Caco-2 (cell line): ENCODE measurements at regions of chr14 and their contacts with region 1.

Region 1: GRCh38 chr14:24431569-24432258 is 2.0 kb downstream of the KHNYN start:
- DNase-seq: peak; percentile 93 to 94
- H3K4me3 ChIP-seq: no peak overlapping the region
- H3K4me3 Mint-ChIP-seq: peak overlapping the region; percentile 78
- H3K27ac Mint-ChIP-seq: peak overlapping the region; percentile 56
- H3K4me1 ChIP-seq: peaks cover 41% of the 10 kb centered on the region
- H3K4me1 Mint-ChIP-seq: peaks cover 27% of the 10 kb centered on the region
- H3K27me3 ChIP-seq: no peaks in the 10 kb centered on the region
- H3K27me3 Mint-ChIP-seq: no peaks in the 10 kb centered on the region
- CTCF ChIP-seq: peak; percentile 96

Region 2: DNA sequence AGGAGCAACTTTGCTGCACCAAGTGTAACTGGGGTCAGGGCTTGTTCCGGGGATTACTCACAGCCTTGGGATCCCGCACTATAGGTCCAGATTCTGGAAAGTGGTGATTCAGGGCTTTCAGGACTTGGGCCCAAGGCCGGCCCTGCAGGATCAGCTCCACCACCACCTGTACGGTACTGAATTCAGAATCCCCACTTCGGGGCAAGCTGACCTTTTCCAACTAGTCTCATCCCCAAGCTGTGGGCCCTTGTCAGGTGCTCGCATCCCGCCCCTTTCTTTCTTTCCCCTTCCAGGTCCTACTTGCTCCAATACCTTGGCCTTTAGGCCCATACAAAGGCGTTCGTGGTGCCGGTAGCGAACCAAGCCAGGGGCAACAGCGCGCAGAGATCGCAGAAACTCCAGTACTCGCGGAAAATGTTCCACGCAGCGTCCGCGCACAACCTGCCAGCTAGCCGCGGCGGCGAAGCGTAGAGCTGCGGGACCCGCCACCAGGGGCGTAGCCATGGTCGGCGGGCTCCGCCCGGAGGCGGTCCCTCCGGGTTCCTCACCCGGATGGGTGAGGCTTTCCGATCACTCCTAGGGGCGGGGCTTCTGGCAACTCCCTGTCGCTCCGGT is 189.8 kb before region 1 on chr14:
- CTCF ChIA-PET with region 1: interaction called, 13 read pairs
- POLR2A ChIA-PET with region 1: interaction called, 6 read pairs
- intact Hi-C with region 1: loop called (anchors 2 kb)
- DNase-seq: peak; percentile 95
- H3K4me3 ChIP-seq: peak overlapping the region; percentile 71
- H3K4me3 Mint-ChIP-seq: peak overlapping the region; percentile 74
- H3K27ac Mint-ChIP-seq: peak overlapping the region; percentile 91
- H3K4me1 ChIP-seq: no peaks in the 10 kb centered on the region
- H3K4me1 Mint-ChIP-seq: peaks cover 9% of the 10 kb centered on the region
- H3K27me3 ChIP-seq: no peaks in the 10 kb centered on the region
- H3K27me3 Mint-ChIP-seq: no peaks in the 10 kb centered on the region
- CTCF ChIP-seq: peak; percentile 49 to 58

Region 3: DNA sequence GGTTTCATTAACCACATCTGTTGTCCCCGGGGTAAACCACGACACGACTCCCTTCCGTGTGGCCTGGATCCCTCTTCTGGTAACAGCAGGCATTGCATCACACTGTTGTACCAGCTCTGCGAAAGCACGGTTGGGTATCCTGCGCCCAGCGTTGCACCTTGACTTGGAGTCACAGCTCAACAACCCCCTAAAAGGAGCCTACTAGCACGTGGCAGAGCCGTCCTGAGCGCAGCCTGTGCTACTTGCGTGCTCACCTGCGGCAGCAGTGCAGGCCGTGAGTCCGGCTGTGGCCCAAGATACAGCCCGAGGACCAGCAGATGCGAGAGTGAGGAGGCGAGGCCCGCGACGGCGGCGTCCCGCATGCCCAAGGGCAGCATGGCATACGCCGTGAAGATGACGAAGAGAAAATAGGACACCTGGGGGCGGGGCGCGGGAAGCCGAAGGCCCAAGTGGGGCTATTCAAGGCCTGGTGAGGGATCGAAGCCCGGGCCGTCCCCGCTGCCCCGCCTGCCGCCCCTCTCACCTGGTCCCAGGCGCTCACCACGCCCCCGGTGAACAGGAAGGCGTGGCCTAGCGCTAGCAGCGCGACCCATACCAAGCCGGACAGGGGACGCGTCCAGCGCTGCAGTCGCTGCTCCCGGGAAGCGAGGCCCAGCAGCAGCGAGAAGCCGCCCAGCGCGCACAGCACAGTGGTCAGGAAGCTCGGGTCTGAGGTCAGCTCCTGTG is 99.3 kb before region 1 on chr14:
- CTCF ChIA-PET with region 1: interaction called, 90 read pairs
- POLR2A ChIA-PET with region 1: interaction called, 8 read pairs
- intact Hi-C with region 1: loop called (anchors 1 kb)
- DNase-seq: peak; percentile 76 to 80
- H3K4me3 ChIP-seq: peak overlapping the region; percentile 55
- H3K4me3 Mint-ChIP-seq: peak overlapping the region; percentile 83
- H3K27ac Mint-ChIP-seq: peak overlapping the region; percentile 15
- H3K4me1 ChIP-seq: peaks cover 15% of the 10 kb centered on the region
- H3K4me1 Mint-ChIP-seq: peaks cover 7% of the 10 kb centered on the region
- H3K27me3 ChIP-seq: no peaks in the 10 kb centered on the region
- H3K27me3 Mint-ChIP-seq: no peaks in the 10 kb centered on the region
- CTCF ChIP-seq: peak; percentile 56 to 66

Region 4: GRCh38 chr14:24372701-24373416 is 58.9 kb before region 1 on chr14:
- CTCF ChIA-PET with region 1: interaction called, 14 read pairs
- POLR2A ChIA-PET with region 1: no interaction called
- intact Hi-C with region 1: no loop called
- DNase-seq: no peak
- H3K4me3 ChIP-seq: no peak overlapping the region
- H3K4me3 Mint-ChIP-seq: no peak overlapping the region
- H3K27ac Mint-ChIP-seq: no peak overlapping the region
- H3K4me1 ChIP-seq: no peaks in the 10 kb centered on the region
- H3K4me1 Mint-ChIP-seq: no peaks in the 10 kb centered on the region
- H3K27me3 ChIP-seq: no peaks in the 10 kb centered on the region
- H3K27me3 Mint-ChIP-seq: no peaks in the 10 kb centered on the region
- CTCF ChIP-seq: no peak

Region 5: DNA sequence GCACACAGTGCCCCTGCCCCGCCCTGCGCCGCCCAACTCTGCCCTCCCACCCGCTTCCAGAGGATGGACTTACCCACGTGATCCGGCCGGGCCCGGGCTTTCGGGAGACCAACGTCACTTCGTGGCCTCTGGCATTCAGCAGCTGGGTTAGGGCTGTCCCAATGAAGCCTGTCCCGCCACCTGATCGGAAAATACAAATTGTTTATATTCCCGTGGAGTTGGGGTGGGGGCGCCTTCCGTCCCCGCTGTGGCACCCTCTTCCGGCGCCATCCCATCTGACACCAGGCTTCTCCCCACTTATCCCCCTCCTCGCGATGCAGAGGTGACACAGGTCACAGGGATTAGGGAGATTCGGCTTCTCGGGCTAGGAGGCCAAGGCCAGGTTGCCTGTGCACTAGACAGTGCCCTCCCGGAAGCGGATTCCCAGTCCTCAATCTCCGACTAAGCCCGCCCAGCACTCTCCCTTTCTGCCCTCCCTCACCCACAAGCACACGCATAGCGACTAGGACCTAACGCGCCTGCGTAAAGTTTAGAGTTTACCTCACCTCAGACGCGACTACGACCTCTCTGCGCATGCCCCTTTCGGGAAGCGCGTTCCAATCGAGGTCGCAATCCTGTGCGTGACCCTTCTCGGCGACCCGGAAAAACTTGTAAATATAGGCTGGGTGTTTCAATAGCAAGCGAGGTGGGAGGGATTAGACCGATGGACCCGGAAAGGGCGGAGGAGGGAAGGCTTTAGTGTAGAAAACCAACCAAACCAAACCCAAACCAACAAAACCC is 10.7 kb after region 1 on chr14 and contains the start of gene SDR39U1:
- CTCF ChIA-PET with region 1: interaction called, 27 read pairs
- POLR2A ChIA-PET with region 1: interaction called, 8 read pairs
- intact Hi-C with region 1: no loop called
- DNase-seq: peak; percentile 96 to 98
- H3K4me3 ChIP-seq: peak within 1 kb of the TSS; percentile 76
- H3K4me3 Mint-ChIP-seq: peak within 1 kb of the TSS; percentile 81
- H3K27ac Mint-ChIP-seq: peak within 1 kb of the TSS; percentile 94
- H3K4me1 ChIP-seq: no peaks in the 10 kb centered on the region; the same call in 1 of the 2 replicates
- H3K4me1 Mint-ChIP-seq: peaks cover 8% of the 10 kb centered on the region
- H3K27me3 ChIP-seq: no peaks in the 10 kb centered on the region
- H3K27me3 Mint-ChIP-seq: no peaks in the 10 kb centered on the region
- CTCF ChIP-seq: no peak
- total RNA-seq, gene SDR39U1: 44.1 and 45.8 TPM in 2 replicates

Region 6: GRCh38 chr14:24456980-24457379 is 25.3 kb after region 1 on chr14:
- CTCF ChIA-PET with region 1: no interaction called
- POLR2A ChIA-PET with region 1: no interaction called
- intact Hi-C with region 1: no loop called
- DNase-seq: no peak
- H3K4me3 ChIP-seq: no peak overlapping the region
- H3K4me3 Mint-ChIP-seq: no peak overlapping the region
- H3K27ac Mint-ChIP-seq: no peak overlapping the region
- H3K4me1 ChIP-seq: no peaks in the 10 kb centered on the region
- H3K4me1 Mint-ChIP-seq: no peaks in the 10 kb centered on the region
- H3K27me3 ChIP-seq: no peaks in the 10 kb centered on the region
- H3K27me3 Mint-ChIP-seq: no peaks in the 10 kb centered on the region
- CTCF ChIP-seq: no peak